ENCODE measurements at regions of chr16 and their contacts with region 1.

Region 1: GRCh38 chr16:11586856-11587642 is at the start of gene LITAF:
- DNase-seq: peak; percentile 65
- ATAC-seq: peak; percentile 68
- H3K4me3 Mint-ChIP-seq: peak within 1 kb of the TSS; percentile 90
- H3K27ac Mint-ChIP-seq: peak within 1 kb of the TSS; percentile 93
- H3K4me1 Mint-ChIP-seq: peaks cover 40% of the 10 kb centered on the region
- H3K27me3 Mint-ChIP-seq: peaks cover 8% of the 10 kb centered on the region
- total RNA-seq, gene LITAF: 79.4 to 80.5 TPM

Region 2: DNA sequence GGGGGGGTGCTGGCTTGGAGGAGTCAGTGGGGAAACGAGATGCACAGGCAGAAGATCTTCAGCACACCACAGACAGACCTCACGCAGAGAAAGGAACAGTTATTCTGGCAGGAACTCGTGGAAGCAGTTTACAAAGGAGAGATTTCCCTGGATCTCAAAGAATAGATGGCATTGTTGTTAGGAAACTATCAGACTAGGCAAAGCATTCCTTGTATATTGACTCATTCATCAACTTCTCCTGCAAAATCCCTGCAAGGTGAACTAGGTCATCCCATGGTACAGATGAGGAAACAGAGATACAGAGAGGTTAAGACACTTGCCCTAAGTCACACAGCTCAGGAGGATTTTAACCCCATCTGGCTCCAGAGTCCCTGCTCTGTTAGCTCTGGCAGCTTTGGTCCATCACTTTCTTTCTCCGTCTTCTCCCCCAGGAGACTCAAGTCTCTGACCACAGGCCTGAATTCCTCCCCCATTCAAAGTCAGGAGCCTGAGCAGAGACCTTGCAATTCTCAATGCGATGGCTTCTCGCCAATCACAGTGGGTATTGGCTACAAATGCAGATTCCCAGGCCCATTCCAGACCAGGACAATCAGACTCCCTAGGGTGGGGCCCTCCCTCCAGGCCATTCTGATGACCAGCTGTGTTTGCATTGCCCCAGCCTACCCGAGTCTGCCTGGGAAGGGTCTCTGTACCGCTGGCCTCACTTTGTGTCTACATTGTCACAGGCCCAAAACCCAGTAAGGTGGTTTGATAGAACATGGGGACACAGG is 56.7 kb before region 1 on chr16:
- CTCF ChIA-PET with region 1: interaction called, 48 read pairs
- POLR2A ChIA-PET with region 1: interaction called, 3 read pairs
- DNase-seq: no peak
- ATAC-seq: no peak
- H3K4me3 Mint-ChIP-seq: no peak overlapping the region
- H3K27ac Mint-ChIP-seq: no peak overlapping the region
- H3K4me1 Mint-ChIP-seq: peaks cover 1% of the 10 kb centered on the region
- H3K27me3 Mint-ChIP-seq: peaks cover 2% of the 10 kb centered on the region

Region 3: GRCh38 chr16:11597239-11598101 is 10.4 kb after region 1 on chr16:
- CTCF ChIA-PET with region 1: interaction called, 7 read pairs
- POLR2A ChIA-PET with region 1: interaction called, 10 read pairs
- DNase-seq: no peak
- ATAC-seq: peak; percentile 56
- H3K4me3 Mint-ChIP-seq: no peak overlapping the region
- H3K27ac Mint-ChIP-seq: no peak overlapping the region
- H3K4me1 Mint-ChIP-seq: peaks cover 30% of the 10 kb centered on the region
- H3K27me3 Mint-ChIP-seq: no peaks in the 10 kb centered on the region

Region 4: GRCh38 chr16:11667824-11668622 is 81.0 kb after region 1 on chr16 and contains the start of gene SNN:
- CTCF ChIA-PET with region 1: interaction called, 3 read pairs
- POLR2A ChIA-PET with region 1: interaction called, 11 read pairs
- DNase-seq: peak; percentile 89
- ATAC-seq: peak; percentile 89
- H3K4me3 Mint-ChIP-seq: peak within 1 kb of the TSS; percentile 84
- H3K27ac Mint-ChIP-seq: peak within 1 kb of the TSS; percentile 97
- H3K4me1 Mint-ChIP-seq: peaks cover 78% of the 10 kb centered on the region
- H3K27me3 Mint-ChIP-seq: no peaks in the 10 kb centered on the region
- total RNA-seq, gene SNN: 27.3 to 28.9 TPM